Mammary epithelial cell (primary cell): ENCODE measurements at regions of chr18 and their contacts with region 1.

Region 1: GRCh38 chr18:12657684-12658425 is at the start of gene SPIRE1:
- DNase-seq: peak; percentile 64
- H3K4me3 ChIP-seq: peak within 1 kb of the TSS; percentile 68 to 86 (median 82)
- H3K27ac ChIP-seq: peak within 1 kb of the TSS; percentile 68
- H3K4me1 ChIP-seq: peaks cover 7% of the 10 kb centered on the region
- H3K27me3 ChIP-seq: no peaks in the 10 kb centered on the region
- CTCF ChIP-seq: no peak
- total RNA-seq, gene SPIRE1: 49.3 to 63.8 TPM

Region 2: GRCh38 chr18:12278741-12279682 is 378.8 kb before region 1 on chr18:
- CTCF ChIA-PET with region 1: no interaction called
- dilution Hi-C with region 1: no loop called
- in situ Hi-C with region 1: no loop called
- intact Hi-C with region 1: loop called (anchors 5 kb)
- DNase-seq: peak; percentile 87
- H3K4me3 ChIP-seq: peak overlapping the region; percentile 7 to 28 (median 18)
- H3K27ac ChIP-seq: peak overlapping the region; percentile 83
- H3K4me1 ChIP-seq: peaks cover 43% of the 10 kb centered on the region
- H3K27me3 ChIP-seq: no peaks in the 10 kb centered on the region
- CTCF ChIP-seq: no peak

Region 3: DNA sequence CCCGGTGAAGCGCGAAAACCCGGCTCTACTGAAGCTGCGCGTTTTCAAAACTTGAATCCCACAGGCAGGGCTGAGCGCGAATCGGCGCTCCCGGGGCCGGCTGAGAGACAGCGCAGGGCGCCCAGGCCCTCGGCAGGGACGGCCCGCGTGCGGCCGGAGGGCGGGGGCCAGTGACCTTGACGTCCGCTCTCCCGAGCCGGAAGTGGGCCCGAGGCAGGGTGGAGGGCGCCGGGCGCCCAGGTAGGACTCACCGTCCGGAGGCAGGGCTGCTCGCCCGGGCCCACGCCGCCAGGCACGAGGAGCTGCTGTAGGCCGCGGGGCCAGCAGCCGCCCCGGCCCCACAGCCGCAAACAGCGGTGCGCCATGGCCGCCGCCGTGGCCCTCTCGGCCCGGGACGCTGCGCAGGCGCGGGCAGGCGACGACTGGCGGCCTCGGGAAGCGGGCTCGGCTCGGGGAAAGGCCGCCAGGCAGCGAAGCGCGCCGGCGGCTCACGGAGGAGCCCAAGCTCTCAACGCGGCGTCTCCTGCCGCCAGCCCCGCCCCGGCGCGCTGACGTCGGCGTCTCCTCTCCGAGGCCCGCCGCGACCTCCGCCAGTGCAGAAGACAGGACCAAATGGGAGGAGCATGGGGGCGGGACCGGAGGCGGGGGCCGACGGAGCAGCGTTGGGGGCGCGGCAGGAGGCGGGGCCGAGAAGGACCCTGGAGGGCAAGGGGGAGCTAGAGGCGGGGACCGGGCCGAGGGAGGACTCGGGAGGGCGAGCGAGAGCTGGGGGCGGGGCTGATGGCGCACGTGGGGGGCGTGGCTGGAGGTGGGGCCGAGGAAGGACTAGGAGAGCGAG is 280.9 kb before region 1 on chr18 and contains the start of gene AFG3L2:
- CTCF ChIA-PET with region 1: no interaction called
- dilution Hi-C with region 1: no loop called
- in situ Hi-C with region 1: no loop called
- intact Hi-C with region 1: loop called (anchors 5 kb)
- DNase-seq: peak; percentile 99
- H3K4me3 ChIP-seq: peak within 1 kb of the TSS; percentile 90 to 95 (median 90)
- H3K27ac ChIP-seq: peak within 1 kb of the TSS; percentile 93
- H3K4me1 ChIP-seq: peaks cover 11% of the 10 kb centered on the region
- H3K27me3 ChIP-seq: no peaks in the 10 kb centered on the region
- CTCF ChIP-seq: no peak
- total RNA-seq, gene AFG3L2: 50.5 to 55.8 TPM

Region 4: GRCh38 chr18:12451428-12451827 is 206.4 kb before region 1 on chr18:
- CTCF ChIA-PET with region 1: no interaction called
- dilution Hi-C with region 1: no loop called
- in situ Hi-C with region 1: no loop called
- intact Hi-C with region 1: loop called (anchors 5 kb)
- DNase-seq: no peak
- H3K4me3 ChIP-seq: no peak overlapping the region
- H3K27ac ChIP-seq: no peak overlapping the region
- H3K4me1 ChIP-seq: no peaks in the 10 kb centered on the region
- H3K27me3 ChIP-seq: no peaks in the 10 kb centered on the region
- CTCF ChIP-seq: no peak

Region 5: GRCh38 chr18:12543697-12544096 is 114.2 kb before region 1 on chr18:
- CTCF ChIA-PET with region 1: no interaction called
- dilution Hi-C with region 1: no loop called
- in situ Hi-C with region 1: no loop called
- intact Hi-C with region 1: loop called (anchors 1 kb)
- DNase-seq: peak; percentile 62
- H3K4me3 ChIP-seq: no peak overlapping the region
- H3K27ac ChIP-seq: no peak overlapping the region
- H3K4me1 ChIP-seq: peaks cover 9% of the 10 kb centered on the region
- H3K27me3 ChIP-seq: no peaks in the 10 kb centered on the region
- CTCF ChIP-seq: no peak

Region 6: GRCh38 chr18:12606592-12607315 is 51.1 kb before region 1 on chr18:
- CTCF ChIA-PET with region 1: no interaction called
- dilution Hi-C with region 1: no loop called
- in situ Hi-C with region 1: no loop called
- intact Hi-C with region 1: loop called (anchors 1 kb)
- DNase-seq: peak; percentile 70
- H3K4me3 ChIP-seq: no peak overlapping the region
- H3K27ac ChIP-seq: peak overlapping the region; percentile 96
- H3K4me1 ChIP-seq: peaks cover 31% of the 10 kb centered on the region
- H3K27me3 ChIP-seq: no peaks in the 10 kb centered on the region
- CTCF ChIP-seq: no peak